GM12878 (cell line): ENCODE measurements at regions of chr16 and their contacts with region 1.

Region 1: DNA sequence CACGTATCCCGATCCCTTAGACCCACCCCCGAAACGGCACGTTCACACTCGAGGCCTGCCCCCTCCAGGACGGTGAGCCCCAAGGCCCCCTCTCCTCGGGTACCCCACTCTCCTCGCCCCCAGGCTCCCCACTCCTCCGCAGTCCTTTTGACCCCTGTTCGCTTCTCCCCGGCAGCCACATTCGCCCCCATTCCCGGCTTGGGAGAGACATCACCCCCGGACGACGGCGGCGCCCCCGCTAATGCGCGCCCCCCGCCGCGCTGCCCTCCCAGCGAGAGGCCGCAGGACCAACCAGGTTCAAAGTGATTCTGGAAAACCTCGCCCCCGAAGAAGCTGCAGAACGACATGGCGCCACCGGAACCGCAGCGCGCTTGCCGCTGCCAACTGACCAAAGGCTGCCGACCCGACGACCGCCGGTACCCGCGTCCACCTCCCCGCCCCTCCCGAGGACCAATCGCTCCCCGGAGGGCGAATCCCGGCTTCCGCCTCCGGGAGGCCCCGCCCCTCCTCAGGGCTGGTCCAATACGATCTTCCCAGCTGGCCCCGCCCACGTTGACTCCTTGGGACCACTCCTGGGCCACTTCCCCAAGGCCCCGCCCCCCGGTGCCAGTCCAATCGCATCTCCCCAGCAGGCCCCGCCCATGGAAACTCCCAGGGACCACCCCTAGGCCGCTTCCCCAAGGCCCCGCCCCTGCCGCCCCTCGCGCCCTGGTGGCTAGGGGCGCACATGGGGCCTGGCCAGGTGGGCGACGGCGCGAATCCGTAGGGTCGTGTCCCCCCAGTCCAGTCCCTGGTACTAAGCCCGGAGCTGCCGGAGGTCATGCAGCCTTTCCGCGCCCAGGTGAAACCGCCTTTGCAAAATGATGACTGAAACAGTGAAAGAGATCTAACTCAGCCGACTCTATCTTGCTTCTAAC is at the start of gene MSRB1:
- DNase-seq: peak; percentile 91
- ATAC-seq: peak; percentile 98
- H3K4me3 ChIP-seq: peak within 1 kb of the TSS; percentile 87
- H3K27ac ChIP-seq: peak within 1 kb of the TSS; percentile 54
- H3K4me1 ChIP-seq: peaks cover 10% of the 10 kb centered on the region; the same call in 1 of the 2 replicates
- H3K27me3 ChIP-seq: no peaks in the 10 kb centered on the region
- CTCF ChIP-seq: no peak
- EP300 ChIP-seq: no peak
- POLR2A ChIP-seq: peak; percentile 88
- RAD21 ChIP-seq: no peak
- polyA plus RNA-seq, gene MSRB1: 5.1 to 9.3 TPM

Region 2: GRCh38 chr16:1964506-1965395 is 21.7 kb after region 1 on chr16 and contains the start of gene RPS2:
- CTCF ChIA-PET with region 1: interaction called, 5 read pairs
- POLR2A ChIA-PET with region 1: interaction called, 13 read pairs
- RAD21 ChIA-PET with region 1: interaction called, 3 read pairs
- SMC1A ChIA-PET with region 1: interaction called, 5 read pairs
- in situ Hi-C with region 1: no loop called
- intact Hi-C with region 1: no loop called
- DNase-seq: peak; percentile 83
- ATAC-seq: peak; percentile 80
- H3K4me3 ChIP-seq: peak within 1 kb of the TSS; percentile 98
- H3K27ac ChIP-seq: peak within 1 kb of the TSS; percentile 90
- H3K4me1 ChIP-seq: peaks cover 14% of the 10 kb centered on the region
- H3K27me3 ChIP-seq: no peaks in the 10 kb centered on the region
- CTCF ChIP-seq: no peak
- EP300 ChIP-seq: no peak
- POLR2A ChIP-seq: peak; percentile 97
- RAD21 ChIP-seq: no peak
- polyA plus RNA-seq, gene RPS2: 1,295 to 3,629 TPM